Heart right ventricle (tissue), 16 donors: ENCODE measurements at regions of chr9 and their contacts with region 1.

Region 1: GRCh38 chr9:131138676-131139075 is 13.3 kb downstream of the NUP214 start:
- DNase-seq: no peak
- ATAC-seq: no peak
- H3K4me3 ChIP-seq: no peak overlapping the region
- H3K27ac ChIP-seq: no peak overlapping the region
- H3K4me1 ChIP-seq: no peaks in the 10 kb centered on the region
- H3K27me3 ChIP-seq: no peaks in the 10 kb centered on the region
- CTCF ChIP-seq: no peak

Region 2: GRCh38 chr9:131053896-131054295 is 84.8 kb before region 1 on chr9:
- intact Hi-C with region 1: loop called in 1 of 10 experiments (anchors 2 kb)
- DNase-seq: no peak
- ATAC-seq: no peak
- H3K4me3 ChIP-seq: no peak overlapping the region
- H3K27ac ChIP-seq: no peak overlapping the region
- H3K4me1 ChIP-seq: peaks cover 0 to 10% (median 0%) of the 10 kb centered on the region in 9 donors
- H3K27me3 ChIP-seq: peaks cover 0 to 17% (median 0%) of the 10 kb centered on the region in 7 donors
- CTCF ChIP-seq: no peak

Region 3: DNA sequence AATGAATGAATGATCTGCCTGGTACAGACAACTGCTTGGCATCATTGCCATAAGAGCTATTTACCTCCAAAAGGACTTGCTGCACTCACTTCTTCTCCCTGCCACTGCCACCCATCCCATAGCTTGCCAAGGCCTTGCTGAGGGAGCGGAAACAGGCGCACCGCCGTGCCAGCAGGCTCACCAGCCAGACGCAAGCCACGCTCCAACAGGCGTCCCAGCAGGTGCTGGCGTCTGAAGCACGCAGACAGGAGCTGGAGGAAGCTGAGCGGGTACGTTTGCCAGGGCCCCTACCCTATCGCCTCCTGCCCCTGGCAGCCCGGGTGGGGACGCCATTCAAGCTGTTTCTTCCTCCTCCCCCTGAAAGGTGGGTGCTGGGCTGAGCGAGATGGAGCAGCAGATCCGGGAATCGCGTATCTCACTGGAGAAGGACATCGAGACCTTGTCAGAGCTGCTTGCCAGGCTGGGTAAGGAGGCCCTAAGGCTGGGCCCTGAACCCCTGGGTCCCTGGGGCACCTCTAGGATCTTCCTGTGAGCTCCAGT is 51.3 kb before region 1 on chr9:
- intact Hi-C with region 1: no loop called
- DNase-seq: no peak
- ATAC-seq: no peak
- H3K4me3 ChIP-seq: no peak overlapping the region
- H3K27ac ChIP-seq: no peak overlapping the region
- H3K4me1 ChIP-seq: peaks cover 0 to 7% (median 0%) of the 10 kb centered on the region in 9 donors
- H3K27me3 ChIP-seq: peaks cover 0 to 8% (median 0%) of the 10 kb centered on the region in 7 donors
- CTCF ChIP-seq: no peak

Region 4: DNA sequence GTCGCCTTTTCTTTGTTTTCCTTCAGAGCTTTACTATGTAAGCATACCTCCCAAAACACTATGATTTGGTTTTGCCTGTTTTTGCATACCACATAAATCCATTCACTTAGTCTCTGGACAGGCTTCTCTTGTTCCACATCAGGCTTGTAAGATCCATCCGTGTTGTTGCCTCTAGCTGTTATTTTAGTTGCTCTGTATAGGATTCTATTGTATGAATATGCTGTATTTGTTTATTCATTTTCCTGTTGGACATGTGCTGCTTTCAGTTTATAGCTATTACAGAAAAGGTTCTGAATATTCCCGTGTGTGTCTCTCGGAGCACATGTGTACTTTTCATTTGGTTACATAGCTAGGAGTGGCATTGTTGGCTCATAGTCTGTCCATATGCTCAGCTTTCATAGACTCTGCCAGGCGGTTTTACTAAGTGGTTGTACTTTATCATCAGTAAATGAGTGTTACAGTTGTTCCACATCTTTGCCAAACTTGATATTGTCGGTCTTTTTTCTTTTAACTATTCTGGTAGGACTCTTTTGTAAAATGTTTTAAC is 28.5 kb after region 1 on chr9:
- intact Hi-C with region 1: no loop called
- DNase-seq: no peak
- ATAC-seq: peak in 2 of 8 donors; percentile 55 to 58
- H3K4me3 ChIP-seq: no peak overlapping the region
- H3K27ac ChIP-seq: no peak overlapping the region
- H3K4me1 ChIP-seq: peaks cover 0 to 12% (median 0%) of the 10 kb centered on the region in 9 donors
- H3K27me3 ChIP-seq: no peaks in the 10 kb centered on the region
- CTCF ChIP-seq: no peak